Esophagus muscularis mucosa (tissue), 4 donors: ENCODE measurements at regions of chr17 and their contacts with region 1.

Region 1: DNA sequence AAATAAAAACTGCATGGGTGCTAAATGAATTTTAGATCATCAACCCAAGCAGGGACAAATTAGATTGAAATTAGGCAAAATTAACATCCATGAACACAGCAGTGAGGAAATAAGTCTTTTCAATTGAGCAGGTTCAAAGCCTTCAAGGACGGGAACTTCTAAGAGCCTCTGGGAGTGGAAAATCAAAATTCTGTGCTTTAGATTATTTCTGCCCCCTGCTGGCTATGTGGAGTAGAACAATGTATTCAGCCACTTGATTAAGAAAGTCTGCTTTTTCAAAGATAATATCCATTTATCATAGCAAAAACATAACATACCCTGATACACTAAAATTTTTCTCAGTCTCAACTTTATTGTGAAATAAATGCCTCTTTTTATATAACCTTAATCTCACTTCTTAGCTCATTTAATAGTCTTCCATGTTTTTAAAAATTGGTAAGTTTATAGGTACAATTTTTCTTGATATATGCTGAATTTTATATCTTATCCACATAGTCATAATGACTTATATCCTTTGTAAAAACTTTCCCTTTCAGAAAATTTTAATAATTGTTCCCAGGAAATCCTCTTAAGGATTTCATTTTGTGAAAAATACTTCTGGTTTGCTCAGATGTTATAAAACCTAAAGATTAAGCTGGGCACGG is 28.1 kb upstream of the NOL11 start:
- DNase-seq: no peak
- H3K4me3 ChIP-seq: no peak overlapping the region
- H3K27ac ChIP-seq: no peak overlapping the region
- H3K4me1 ChIP-seq: peaks cover 0 to 5% (median 0%) of the 10 kb centered on the region in 4 donors
- H3K27me3 ChIP-seq: no peaks in the 10 kb centered on the region
- CTCF ChIP-seq: peak; percentile 80 to 89 (median 87)
- EP300 ChIP-seq: no peak
- POLR2A ChIP-seq: no peak

Region 2: GRCh38 chr17:67378454-67379250 is 311.0 kb before region 1 on chr17:
- intact Hi-C with region 1: loop called (anchors 2 kb)
- DNase-seq: peak; percentile 96
- H3K4me3 ChIP-seq: peak overlapping the region; percentile 81 to 93 (median 90)
- H3K27ac ChIP-seq: peak overlapping the region; percentile 91 to 96 (median 95)
- H3K4me1 ChIP-seq: peaks cover 18 to 50% (median 42%) of the 10 kb centered on the region in 4 donors
- H3K27me3 ChIP-seq: no peaks in the 10 kb centered on the region
- CTCF ChIP-seq: peak; percentile 76 to 92 (median 85)
- EP300 ChIP-seq: no peak
- POLR2A ChIP-seq: no peak

Region 3: GRCh38 chr17:67488161-67488560 is 201.5 kb before region 1 on chr17:
- intact Hi-C with region 1: loop called (anchors 10 kb)
- DNase-seq: no peak
- H3K4me3 ChIP-seq: no peak overlapping the region
- H3K27ac ChIP-seq: peak overlapping the region; percentile 76 to 88 (median 85)
- H3K4me1 ChIP-seq: peaks cover 37 to 76% (median 68%) of the 10 kb centered on the region in 4 donors
- H3K27me3 ChIP-seq: no peaks in the 10 kb centered on the region
- CTCF ChIP-seq: no peak
- EP300 ChIP-seq: no peak
- POLR2A ChIP-seq: no peak

Region 4: GRCh38 chr17:67891581-67892054 is 202.0 kb after region 1 on chr17:
- intact Hi-C with region 1: no loop called
- DNase-seq: no peak
- H3K4me3 ChIP-seq: no peak overlapping the region
- H3K27ac ChIP-seq: no peak overlapping the region
- H3K4me1 ChIP-seq: no peaks in the 10 kb centered on the region
- H3K27me3 ChIP-seq: no peaks in the 10 kb centered on the region
- CTCF ChIP-seq: peak in 2 of 3 experiments; percentile 21 to 22
- EP300 ChIP-seq: no peak
- POLR2A ChIP-seq: no peak